ENCODE measurements at regions of chr9 and their contacts with region 1.

Region 1: DNA sequence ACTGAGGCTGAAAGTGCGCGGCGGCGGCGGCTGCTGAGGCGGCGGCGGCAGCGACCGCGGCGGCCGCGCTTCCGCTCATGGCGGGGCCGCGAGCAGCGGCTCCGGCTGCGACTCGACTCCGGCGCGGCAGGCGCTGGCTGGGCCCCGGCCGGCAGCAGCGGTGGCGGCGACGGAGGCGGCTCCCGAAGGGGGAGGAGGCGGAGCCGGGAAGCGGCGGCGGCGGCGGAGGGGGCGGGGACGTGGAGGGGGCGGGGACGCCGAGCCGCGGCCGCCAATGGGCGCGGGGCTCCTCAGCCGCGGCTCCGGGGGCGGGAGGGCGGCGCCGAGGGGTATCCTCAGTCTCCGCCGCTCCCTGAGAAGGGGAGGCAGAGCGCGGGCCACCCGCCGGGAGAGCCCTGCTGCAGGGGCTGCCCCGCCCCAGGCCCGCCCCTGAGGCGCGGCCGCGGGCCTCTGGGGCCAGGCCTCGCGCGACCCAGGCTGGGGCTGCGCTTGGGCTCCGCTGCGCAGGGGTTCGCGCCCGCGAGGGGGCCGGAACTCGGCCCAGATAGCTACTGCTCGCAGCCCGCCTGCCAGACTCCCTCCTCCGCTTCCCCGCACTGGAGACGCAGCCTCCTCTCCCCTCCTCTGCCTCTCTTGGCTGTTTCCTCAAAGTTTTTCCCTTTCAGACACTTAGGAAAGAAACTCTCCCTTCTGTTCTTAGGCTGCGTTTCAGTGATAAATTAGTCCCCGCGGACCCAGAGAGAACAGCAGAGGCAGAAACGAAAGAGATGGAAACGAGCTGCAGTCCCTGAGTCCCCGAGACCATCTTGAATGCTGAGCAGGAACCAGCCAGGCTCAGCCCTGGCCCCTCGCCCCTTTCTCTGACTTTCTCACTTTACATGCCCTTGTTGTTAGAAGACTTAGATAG is 85.0 kb upstream of the MELK start:
- DNase-seq: peak; percentile 80
- ATAC-seq: peak; percentile 98
- H3K4me3 ChIP-seq: peak overlapping the region; percentile 78 to 99 (median 94)
- H3K27ac ChIP-seq: peak overlapping the region; percentile 88
- H3K4me1 ChIP-seq: peaks cover 33% of the 10 kb centered on the region
- H3K27me3 ChIP-seq: no peaks in the 10 kb centered on the region; a peak in 1 of 5 replicates
- CTCF ChIP-seq: no peak
- EP300 ChIP-seq: no peak
- POLR2A ChIP-seq: peak; percentile 76 to 82
- RAD21 ChIP-seq: peak; percentile 69

Region 2: GRCh38 chr9:36258208-36258988 is 229.3 kb before region 1 on chr9 and contains the start of gene GNE:
- CTCF ChIA-PET with region 1: no interaction called
- POLR2A ChIA-PET with region 1: no interaction called
- in situ Hi-C with region 1: no loop called
- intact Hi-C with region 1: no loop called
- DNase-seq: peak; percentile 89
- ATAC-seq: peak; percentile 94
- H3K4me3 ChIP-seq: peak within 1 kb of the TSS; percentile 72 to 85 (median 75)
- H3K27ac ChIP-seq: peak within 1 kb of the TSS; percentile 83
- H3K4me1 ChIP-seq: peaks cover 23% of the 10 kb centered on the region
- H3K27me3 ChIP-seq: no peaks in the 10 kb centered on the region; a peak in 1 of 5 replicates
- CTCF ChIP-seq: peak; percentile 16; the same call in 1 of the 2 replicates
- EP300 ChIP-seq: peak in 1 of 2 experiments; percentile 8; a peak in 1 of 4 replicates
- POLR2A ChIP-seq: peak; percentile 98 to 99
- RAD21 ChIP-seq: peak; percentile 31; the same call in 1 of the 2 replicates
- total RNA-seq, gene GNE: 24.1 and 38.8 TPM in 2 replicates

Region 3: GRCh38 chr9:36400332-36401163 is 87.2 kb before region 1 on chr9:
- CTCF ChIA-PET with region 1: no interaction called
- POLR2A ChIA-PET with region 1: interaction called, 10 read pairs
- in situ Hi-C with region 1: no loop called
- intact Hi-C with region 1: loop called (anchors 10 kb)
- DNase-seq: peak; percentile 77
- ATAC-seq: peak; percentile 88
- H3K4me3 ChIP-seq: peak overlapping the region; percentile 77 to 100 (median 85)
- H3K27ac ChIP-seq: peak overlapping the region; percentile 84
- H3K4me1 ChIP-seq: peaks cover 28% of the 10 kb centered on the region
- H3K27me3 ChIP-seq: no peaks in the 10 kb centered on the region; a peak in 1 of 5 replicates
- CTCF ChIP-seq: peak; percentile 45
- EP300 ChIP-seq: peak; percentile 8 to 34; a peak in 1 of 4 replicates
- POLR2A ChIP-seq: peak; percentile 56 to 64
- RAD21 ChIP-seq: no peak; the same call in 1 of the 2 replicates

Region 4: DNA sequence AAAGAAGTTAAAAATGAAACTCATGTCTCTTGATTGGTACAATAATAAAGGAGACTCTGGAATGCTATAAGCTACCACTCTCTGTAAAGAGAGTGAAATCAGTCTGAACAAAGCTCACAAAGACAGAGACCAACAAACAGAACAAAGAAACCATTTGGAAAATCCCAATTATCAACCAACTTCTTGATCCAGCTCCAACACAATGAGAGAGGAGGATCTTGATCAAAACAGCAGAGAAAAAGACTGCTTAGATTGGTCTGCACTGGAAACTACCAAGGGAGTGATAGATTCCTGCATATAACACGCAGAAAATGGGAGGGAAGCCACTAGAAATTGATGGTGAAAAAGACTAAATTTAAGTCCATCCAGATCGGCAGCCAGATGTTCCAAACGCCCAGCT is 64.5 kb before region 1 on chr9:
- CTCF ChIA-PET with region 1: no interaction called
- POLR2A ChIA-PET with region 1: no interaction called
- in situ Hi-C with region 1: no loop called
- intact Hi-C with region 1: no loop called
- DNase-seq: peak; percentile 32
- ATAC-seq: no peak
- H3K4me3 ChIP-seq: no peak overlapping the region
- H3K27ac ChIP-seq: peak overlapping the region; percentile 63
- H3K4me1 ChIP-seq: peaks cover 63% of the 10 kb centered on the region
- H3K27me3 ChIP-seq: no peaks in the 10 kb centered on the region
- CTCF ChIP-seq: no peak
- EP300 ChIP-seq: no peak
- POLR2A ChIP-seq: no peak
- RAD21 ChIP-seq: no peak

Region 5: DNA sequence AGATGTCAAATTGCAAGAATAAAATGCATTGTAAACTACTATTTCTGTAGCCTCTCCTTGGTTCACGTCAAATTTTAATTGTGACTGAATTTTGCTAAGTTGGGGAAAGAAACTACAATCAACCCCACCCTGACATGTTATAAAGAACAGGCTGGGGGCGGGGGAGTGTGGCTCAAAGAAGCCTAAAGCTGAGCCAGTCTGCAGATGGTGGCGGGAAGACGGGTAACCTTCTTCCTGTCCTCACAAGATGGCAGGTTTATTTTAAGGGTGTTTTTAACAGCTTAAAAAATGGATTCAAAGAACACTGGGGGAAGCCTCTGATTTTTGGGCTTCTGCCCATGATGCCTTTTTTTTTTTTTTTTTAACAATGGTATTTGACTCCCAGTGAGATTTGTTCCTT is 16.4 kb after region 1 on chr9:
- CTCF ChIA-PET with region 1: no interaction called
- POLR2A ChIA-PET with region 1: interaction called, 17 read pairs
- in situ Hi-C with region 1: no loop called
- intact Hi-C with region 1: no loop called
- DNase-seq: no peak
- ATAC-seq: no peak
- H3K4me3 ChIP-seq: no peak overlapping the region; a peak in 1 of 6 replicates
- H3K27ac ChIP-seq: peak overlapping the region; percentile 45
- H3K4me1 ChIP-seq: peaks cover 52% of the 10 kb centered on the region
- H3K27me3 ChIP-seq: no peaks in the 10 kb centered on the region; a peak in 1 of 5 replicates
- CTCF ChIP-seq: no peak
- EP300 ChIP-seq: no peak
- POLR2A ChIP-seq: no peak
- RAD21 ChIP-seq: no peak

Region 6: GRCh38 chr9:36560857-36561221 is 73.1 kb after region 1 on chr9:
- CTCF ChIA-PET with region 1: no interaction called
- POLR2A ChIA-PET with region 1: no interaction called
- in situ Hi-C with region 1: no loop called
- intact Hi-C with region 1: loop called (anchors 5 kb)
- DNase-seq: no peak
- ATAC-seq: no peak
- H3K4me3 ChIP-seq: no peak overlapping the region
- H3K27ac ChIP-seq: no peak overlapping the region
- H3K4me1 ChIP-seq: peaks cover 8% of the 10 kb centered on the region
- H3K27me3 ChIP-seq: no peaks in the 10 kb centered on the region
- CTCF ChIP-seq: no peak
- EP300 ChIP-seq: no peak
- POLR2A ChIP-seq: no peak
- RAD21 ChIP-seq: no peak